ENCODE measurements at regions of chr19 and their contacts with region 1.

Region 1: DNA sequence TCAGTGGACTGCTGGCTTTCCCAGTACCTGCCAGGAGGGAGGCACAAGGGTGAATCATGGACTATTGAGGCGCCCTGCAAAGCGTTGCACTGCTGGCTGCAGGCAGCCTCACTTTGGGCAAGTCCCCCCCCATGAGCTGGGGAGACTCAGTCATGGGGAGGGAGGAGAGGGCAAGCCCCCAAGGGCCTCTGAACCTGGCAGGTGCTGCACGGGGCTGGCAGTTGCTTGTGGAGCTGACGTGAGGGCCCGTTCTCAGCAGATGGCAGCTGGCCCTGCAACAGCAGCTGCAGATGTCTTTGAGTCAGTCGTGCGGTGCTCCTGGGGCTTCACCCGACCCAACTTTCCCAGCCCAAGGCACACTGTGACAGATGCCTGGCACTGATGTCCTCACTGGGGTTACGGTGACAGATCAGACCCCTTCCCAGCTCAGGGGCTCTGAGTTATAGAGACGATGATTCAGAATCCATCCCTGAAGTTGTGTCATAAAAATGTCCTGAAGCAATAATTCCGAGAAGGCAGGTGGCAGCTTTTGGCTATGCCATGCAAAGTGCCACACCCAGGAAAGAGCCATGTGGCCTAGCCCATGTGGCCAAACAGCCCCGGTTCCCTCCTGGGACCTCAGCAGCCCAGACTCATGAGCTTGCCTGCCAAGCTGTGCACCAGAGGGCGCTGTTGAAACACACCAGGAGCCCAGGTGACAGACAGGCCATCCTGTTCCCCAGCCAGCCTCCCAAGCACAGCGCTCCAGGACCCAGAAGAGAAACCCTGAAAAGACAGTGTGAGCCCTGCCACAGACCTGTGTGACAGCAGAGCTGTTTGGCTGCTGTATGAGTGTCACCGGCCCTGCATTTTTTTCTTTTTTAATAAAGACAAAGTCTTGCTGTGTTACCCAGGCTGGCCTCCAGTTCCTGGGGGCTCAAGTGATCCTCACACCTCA is 53.6 kb upstream of the LDLR start:
- DNase-seq: peak; percentile 91 to 92
- ATAC-seq: peak; percentile 92 to 97 (median 94)
- H3K4me3 ChIP-seq: no peak overlapping the region
- H3K27ac ChIP-seq: peak overlapping the region in 5 of 10 donors; percentile 10 to 53 (median 47)
- H3K4me1 ChIP-seq: peaks cover 0 to 13% (median 11%) of the 10 kb centered on the region in 9 donors
- H3K27me3 ChIP-seq: no peaks in the 10 kb centered on the region
- CTCF ChIP-seq: peak; percentile 63 to 95 (median 89)

Region 2: GRCh38 chr19:10946964-10947657 is 88.6 kb before region 1 on chr19:
- intact Hi-C with region 1: loop called in 1 of 10 experiments (anchors 10 kb)
- DNase-seq: no peak
- ATAC-seq: no peak
- H3K4me3 ChIP-seq: no peak overlapping the region
- H3K27ac ChIP-seq: no peak overlapping the region
- H3K4me1 ChIP-seq: peaks cover 0 to 5% (median 0%) of the 10 kb centered on the region in 9 donors
- H3K27me3 ChIP-seq: no peaks in the 10 kb centered on the region
- CTCF ChIP-seq: no peak

Region 3: GRCh38 chr19:11078893-11079292 is 43.2 kb after region 1 on chr19:
- intact Hi-C with region 1: no loop called
- DNase-seq: no peak
- ATAC-seq: no peak
- H3K4me3 ChIP-seq: no peak overlapping the region
- H3K27ac ChIP-seq: no peak overlapping the region
- H3K4me1 ChIP-seq: peaks cover 0 to 19% (median 0%) of the 10 kb centered on the region in 9 donors
- H3K27me3 ChIP-seq: no peaks in the 10 kb centered on the region
- CTCF ChIP-seq: no peak

Region 4: DNA sequence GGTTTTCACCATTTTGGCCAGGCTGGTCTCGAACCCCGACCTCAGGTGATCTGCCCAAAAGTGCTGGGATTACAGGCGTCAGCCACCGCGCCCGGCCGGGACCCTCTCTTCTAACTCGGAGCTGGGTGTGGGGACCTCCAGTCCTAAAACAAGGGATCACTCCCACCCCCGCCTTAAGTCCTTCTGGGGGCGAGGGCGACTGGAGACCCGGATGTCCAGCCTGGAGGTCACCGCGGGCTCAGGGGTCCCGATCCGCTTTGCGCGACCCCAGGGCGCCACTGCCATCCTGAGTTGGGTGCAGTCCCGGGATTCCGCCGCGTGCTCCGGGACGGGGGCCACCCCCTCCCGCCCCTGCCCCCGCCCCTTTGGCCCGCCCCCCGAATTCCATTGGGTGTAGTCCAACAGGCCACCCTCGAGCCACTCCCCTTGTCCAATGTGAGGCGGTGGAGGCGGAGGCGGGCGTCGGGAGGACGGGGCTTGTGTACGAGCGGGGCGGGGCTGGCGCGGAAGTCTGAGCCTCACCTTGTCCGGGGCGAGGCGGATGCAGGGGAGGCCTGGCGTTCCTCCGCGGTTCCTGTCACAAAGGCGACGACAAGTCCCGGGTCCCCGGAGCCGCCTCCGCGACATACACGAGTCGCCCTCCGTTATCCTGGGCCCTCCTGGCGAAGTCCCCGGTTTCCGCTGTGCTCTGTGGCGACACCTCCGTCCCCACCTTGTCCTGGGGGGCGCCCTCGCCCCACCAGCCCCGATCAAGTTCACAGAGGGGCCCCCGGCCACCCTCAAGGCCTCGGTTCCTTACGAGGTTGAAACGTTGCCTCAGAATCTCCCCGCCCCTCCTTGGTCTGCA is 54.6 kb after region 1 on chr19:
- intact Hi-C with region 1: loop called in 5 of 10 experiments (anchors 5 kb)
- DNase-seq: peak; percentile 98 to 99
- ATAC-seq: peak; percentile 91 to 97 (median 92)
- H3K4me3 ChIP-seq: peak overlapping the region; percentile 53 to 90 (median 70)
- H3K27ac ChIP-seq: peak overlapping the region; percentile 91 to 99 (median 96)
- H3K4me1 ChIP-seq: peaks cover 0 to 78% (median 58%) of the 10 kb centered on the region in 9 donors
- H3K27me3 ChIP-seq: no peaks in the 10 kb centered on the region
- CTCF ChIP-seq: no peak

Region 5: GRCh38 chr19:11106477-11106876 is 70.8 kb after region 1 on chr19:
- intact Hi-C with region 1: loop called in 2 of 10 experiments (anchors 5 to 10 kb)
- DNase-seq: peak; percentile 56 to 57
- ATAC-seq: peak in 7 of 8 donors; percentile 45 to 87 (median 76)
- H3K4me3 ChIP-seq: no peak overlapping the region
- H3K27ac ChIP-seq: peak overlapping the region in 1 of 10 donors; percentile 1
- H3K4me1 ChIP-seq: peaks cover 0 to 6% (median 0%) of the 10 kb centered on the region in 9 donors
- H3K27me3 ChIP-seq: no peaks in the 10 kb centered on the region
- CTCF ChIP-seq: peak in 3 of 9 donors; percentile 16 to 23 (median 18)

Region 6: DNA sequence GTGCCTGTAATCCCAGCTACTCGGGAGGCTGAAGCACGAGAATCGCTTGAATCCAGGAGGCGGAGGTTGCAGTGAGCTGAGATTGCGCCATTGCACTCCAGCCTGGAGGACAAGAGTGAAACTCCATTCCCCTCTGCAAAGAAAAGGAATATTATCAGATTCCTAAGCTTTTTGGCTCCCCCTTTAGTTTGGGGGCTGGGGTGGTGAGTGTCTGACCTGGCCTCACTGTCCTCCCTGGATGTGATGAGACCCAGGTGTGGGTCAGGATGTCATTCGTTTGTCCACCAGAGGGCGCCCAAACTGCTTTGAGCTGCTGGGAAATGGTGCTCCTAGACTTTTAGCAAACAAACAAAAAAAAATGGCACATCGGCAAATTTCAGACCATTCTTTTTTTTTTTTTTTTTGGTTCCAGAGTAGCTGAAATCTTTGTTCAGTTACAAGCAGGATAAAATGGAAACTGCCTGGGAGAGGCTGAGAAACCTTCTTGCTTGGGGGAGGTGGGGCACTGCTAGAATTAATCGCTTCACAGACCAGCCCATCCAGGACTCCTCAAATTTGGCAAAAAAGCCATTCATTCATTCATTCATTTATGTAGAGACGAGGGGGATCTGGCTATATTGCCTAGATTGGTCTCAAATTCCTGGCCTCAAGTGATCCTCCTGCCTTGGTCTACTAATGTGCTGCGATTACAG is 90.4 kb after region 1 on chr19:
- intact Hi-C with region 1: loop called in 9 of 10 experiments (anchors 1 to 5 kb)
- DNase-seq: peak; percentile 76 to 79
- ATAC-seq: peak in 7 of 8 donors; percentile 62 to 80 (median 71)
- H3K4me3 ChIP-seq: no peak overlapping the region
- H3K27ac ChIP-seq: peak overlapping the region in 2 of 10 donors; percentile 7 to 29
- H3K4me1 ChIP-seq: peaks cover under 1 to 21% (median 9%) of the 10 kb centered on the region in 9 donors
- H3K27me3 ChIP-seq: no peaks in the 10 kb centered on the region
- CTCF ChIP-seq: peak; percentile 71 to 86 (median 79)

Region 7: GRCh38 chr19:11142528-11143171 is 106.9 kb after region 1 on chr19:
- intact Hi-C with region 1: no loop called
- DNase-seq: peak; percentile 92 to 95
- ATAC-seq: peak; percentile 72 to 89 (median 85)
- H3K4me3 ChIP-seq: peak overlapping the region in 8 of 10 donors; percentile 15 to 43 (median 28)
- H3K27ac ChIP-seq: peak overlapping the region; percentile 93 to 100 (median 99)
- H3K4me1 ChIP-seq: peaks cover 35 to 65% (median 59%) of the 10 kb centered on the region in 9 donors
- H3K27me3 ChIP-seq: no peaks in the 10 kb centered on the region
- CTCF ChIP-seq: no peak

Region 8: DNA sequence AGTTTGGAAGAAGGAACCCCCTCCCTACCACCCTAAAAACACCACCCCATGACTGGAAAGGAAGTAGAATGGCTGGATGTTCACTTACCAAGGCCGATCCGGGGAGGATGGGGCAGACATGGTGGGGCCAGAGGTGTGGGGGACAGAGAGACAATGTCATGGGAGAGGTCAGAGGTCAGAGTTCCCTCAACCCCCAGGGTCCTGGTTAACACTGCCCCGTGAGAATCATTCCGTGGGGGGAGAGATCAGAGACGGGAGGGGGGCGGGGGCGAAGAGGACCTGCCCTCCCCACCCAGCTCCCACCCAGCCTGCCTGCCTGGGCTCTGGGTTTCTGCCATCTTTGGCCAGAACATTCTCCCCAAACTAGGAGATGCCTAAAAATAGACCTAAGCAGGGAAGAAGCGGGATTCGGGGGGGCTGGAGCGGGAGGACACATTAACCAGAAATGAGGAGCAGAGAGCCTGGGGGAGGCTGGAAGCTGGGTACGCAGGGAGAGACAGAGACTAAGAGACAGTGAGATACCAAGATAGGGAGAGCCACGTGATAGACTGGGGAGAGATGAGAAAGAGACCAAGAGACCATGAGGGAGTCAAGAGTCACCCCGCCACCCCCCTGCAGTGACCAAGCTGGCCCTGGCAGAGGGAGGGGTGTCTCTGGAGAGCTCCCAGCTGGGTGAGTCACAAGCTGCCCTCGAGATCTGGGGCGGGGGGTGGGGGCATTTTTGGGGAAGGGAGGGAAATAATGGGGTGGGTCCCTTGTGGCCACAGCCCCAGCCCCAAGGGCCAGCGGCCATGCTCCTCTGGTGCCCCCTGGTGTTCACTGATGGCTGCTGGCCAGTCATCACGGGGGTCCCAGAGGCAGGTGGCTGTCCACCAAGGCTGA is 167.7 kb after region 1 on chr19:
- intact Hi-C with region 1: loop called in 8 of 10 experiments (anchors 5 to 10 kb)
- DNase-seq: peak; percentile 81 to 87
- ATAC-seq: peak; percentile 71 to 85 (median 78)
- H3K4me3 ChIP-seq: peak overlapping the region in 7 of 10 donors; percentile 2 to 37 (median 33)
- H3K27ac ChIP-seq: peak overlapping the region; percentile 81 to 94 (median 85)
- H3K4me1 ChIP-seq: peaks cover 13 to 43% (median 29%) of the 10 kb centered on the region in 9 donors
- H3K27me3 ChIP-seq: no peaks in the 10 kb centered on the region
- CTCF ChIP-seq: peak; percentile 82 to 92 (median 87)

Region 9: DNA sequence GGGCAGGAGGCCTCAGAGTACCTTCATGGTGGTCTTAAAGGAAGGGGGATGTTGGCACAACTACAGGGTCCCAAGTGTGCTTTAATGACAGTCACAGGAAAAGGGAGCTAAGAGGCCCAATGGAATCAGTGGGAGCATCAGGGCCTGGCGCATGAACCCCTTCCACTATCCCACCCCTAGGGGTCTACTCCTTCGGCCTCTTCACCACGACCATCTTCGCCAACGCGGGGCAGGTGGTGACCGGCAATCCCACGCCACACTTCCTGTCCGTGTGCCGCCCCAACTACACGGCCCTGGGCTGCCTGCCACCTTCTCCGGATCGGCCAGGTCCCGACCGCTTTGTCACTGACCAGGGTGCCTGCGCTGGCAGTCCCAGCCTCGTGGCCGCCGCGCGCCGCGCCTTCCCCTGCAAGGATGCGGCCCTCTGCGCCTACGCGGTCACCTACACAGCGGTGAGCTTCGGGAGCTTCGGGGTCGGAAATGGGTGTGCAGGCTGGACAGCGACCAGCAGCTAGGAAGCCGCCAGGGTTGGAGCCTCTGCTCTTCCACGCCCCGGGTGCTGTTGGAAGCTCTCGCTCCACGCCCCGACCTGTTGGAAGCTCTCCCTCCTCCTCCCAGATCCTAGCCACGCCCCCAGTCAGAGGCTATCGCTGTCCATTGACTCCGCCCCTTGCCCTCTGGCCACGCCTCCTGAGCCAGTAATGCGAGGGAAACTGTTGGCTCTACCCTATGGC is 325.5 kb after region 1 on chr19:
- intact Hi-C with region 1: no loop called
- DNase-seq: peak in 1 of 2 donors; percentile 52
- ATAC-seq: peak in 5 of 8 donors; percentile 9 to 50 (median 26)
- H3K4me3 ChIP-seq: peak overlapping the region in 1 of 10 donors; percentile 20
- H3K27ac ChIP-seq: no peak overlapping the region
- H3K4me1 ChIP-seq: peaks cover 0 to 10% (median 2%) of the 10 kb centered on the region in 9 donors
- H3K27me3 ChIP-seq: no peaks in the 10 kb centered on the region
- CTCF ChIP-seq: no peak